Sigmoid colon (tissue), 7 donors: ENCODE measurements at regions of chr6 and their contacts with region 1.

Region 1: GRCh38 chr6:152351110-152351509 is 286.1 kb downstream of the SYNE1 start:
- DNase-seq: no peak
- H3K4me3 ChIP-seq: no peak overlapping the region
- H3K27ac ChIP-seq: peak overlapping the region in 3 of 4 donors; percentile 0 to 37 (median 3)
- H3K4me1 ChIP-seq: peaks cover 0 to 7% (median 0%) of the 10 kb centered on the region in 4 donors
- H3K27me3 ChIP-seq: no peaks in the 10 kb centered on the region
- CTCF ChIP-seq: no peak
- EP300 ChIP-seq: no peak
- POLR2A ChIP-seq: no peak

Region 2: GRCh38 chr6:152206072-152206818 is 144.9 kb before region 1 on chr6:
- intact Hi-C with region 1: no loop called
- DNase-seq: peak; percentile 58
- H3K4me3 ChIP-seq: no peak overlapping the region
- H3K27ac ChIP-seq: no peak overlapping the region
- H3K4me1 ChIP-seq: no peaks in the 10 kb centered on the region
- H3K27me3 ChIP-seq: no peaks in the 10 kb centered on the region
- CTCF ChIP-seq: peak in 1 of 4 experiments; percentile 36
- EP300 ChIP-seq: no peak
- POLR2A ChIP-seq: no peak

Region 3: GRCh38 chr6:152309648-152310047 is 41.5 kb before region 1 on chr6:
- intact Hi-C with region 1: loop called (anchors 5 kb)
- DNase-seq: no peak
- H3K4me3 ChIP-seq: no peak overlapping the region
- H3K27ac ChIP-seq: no peak overlapping the region
- H3K4me1 ChIP-seq: no peaks in the 10 kb centered on the region
- H3K27me3 ChIP-seq: no peaks in the 10 kb centered on the region
- CTCF ChIP-seq: no peak
- EP300 ChIP-seq: no peak
- POLR2A ChIP-seq: no peak